Thyroid gland (tissue), 4 donors: ENCODE measurements at regions of chr13 and their contacts with region 1.

Region 1: GRCh38 chr13:113562085-113562749 is 22.3 kb upstream of the TFDP1 start:
- DNase-seq: peak; percentile 55 to 64
- H3K4me3 ChIP-seq: no peak overlapping the region
- H3K27ac ChIP-seq: no peak overlapping the region
- H3K4me1 ChIP-seq: no peaks in the 10 kb centered on the region
- H3K27me3 ChIP-seq: no peaks in the 10 kb centered on the region
- CTCF ChIP-seq: peak; percentile 11 to 77 (median 61)
- POLR2A ChIP-seq: no peak

Region 2: DNA sequence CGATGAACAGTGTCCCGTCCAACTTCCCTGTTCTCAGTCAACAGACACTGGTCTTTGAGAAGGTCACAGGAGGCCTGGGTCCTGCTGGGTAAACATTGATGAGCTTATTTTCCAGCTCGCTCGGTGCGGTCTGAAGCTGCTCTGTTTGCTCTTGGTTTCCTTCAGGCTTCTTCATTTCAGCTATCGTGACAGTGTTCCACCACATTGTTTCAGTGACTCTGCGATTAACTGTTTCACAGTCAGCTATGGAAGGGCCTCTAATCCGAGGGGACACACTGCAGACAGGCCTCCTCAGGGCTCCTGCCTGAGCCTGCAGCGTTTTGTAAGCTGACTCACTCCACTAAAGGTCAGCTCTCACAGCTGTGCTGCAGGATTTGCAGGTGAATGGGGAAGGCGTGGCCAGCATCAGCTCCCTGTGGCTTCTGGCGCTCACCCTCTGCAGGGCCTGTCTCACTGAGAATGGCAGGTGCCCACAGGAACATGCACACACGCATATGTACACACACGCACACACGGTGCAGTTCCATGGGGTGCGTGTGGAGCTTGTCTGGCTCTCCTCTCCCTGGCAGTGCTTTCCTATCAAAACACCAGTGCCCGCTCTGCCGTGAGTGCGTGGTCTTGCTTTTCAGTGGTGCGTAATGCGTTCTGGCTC is 656.1 kb before region 1 on chr13:
- intact Hi-C with region 1: no loop called
- DNase-seq: no peak
- H3K4me3 ChIP-seq: no peak overlapping the region
- H3K27ac ChIP-seq: no peak overlapping the region
- H3K4me1 ChIP-seq: peaks cover 39 to 41% of the 10 kb centered on the region in 2 donors
- H3K27me3 ChIP-seq: no peaks in the 10 kb centered on the region
- CTCF ChIP-seq: no peak
- POLR2A ChIP-seq: no peak

Region 3: GRCh38 chr13:113490496-113491417 is 71.5 kb before region 1 on chr13 and contains the start of gene DCUN1D2:
- intact Hi-C with region 1: loop called (anchors 10 kb)
- DNase-seq: peak; percentile 85 to 88
- H3K4me3 ChIP-seq: peak within 1 kb of the TSS; percentile 13 to 98 (median 63)
- H3K27ac ChIP-seq: peak within 1 kb of the TSS in 2 of 3 donors; percentile 69 to 71
- H3K4me1 ChIP-seq: peaks cover 28 to 32% of the 10 kb centered on the region in 2 donors
- H3K27me3 ChIP-seq: no peaks in the 10 kb centered on the region
- CTCF ChIP-seq: no peak
- POLR2A ChIP-seq: peak in 1 of 2 donors; percentile 82
- total RNA-seq, gene DCUN1D2: 8.8 to 15.3 (median 10.4) TPM

Region 4: DNA sequence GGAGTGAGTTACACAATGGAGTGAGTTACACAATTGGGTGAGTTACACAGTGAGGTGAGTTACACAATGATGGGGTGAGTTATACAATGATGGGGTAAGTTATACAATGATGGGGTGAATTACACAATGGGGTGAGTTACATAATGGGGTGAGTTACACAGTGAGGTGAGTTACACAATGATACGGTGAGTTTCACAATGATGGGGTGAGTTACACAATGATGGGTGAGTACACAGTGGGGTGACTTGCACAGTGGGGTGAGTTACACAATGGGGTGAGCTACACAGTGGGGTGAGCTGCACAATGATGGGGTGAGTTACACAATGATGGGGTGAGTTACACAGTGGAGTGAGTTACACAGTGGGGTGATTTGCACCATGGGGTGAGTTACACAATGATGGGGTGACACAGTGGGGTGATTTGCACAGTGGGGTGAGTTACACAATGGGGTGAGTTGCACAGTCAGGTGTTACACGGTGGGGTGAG is 354.2 kb after region 1 on chr13:
- intact Hi-C with region 1: no loop called
- DNase-seq: no peak
- H3K4me3 ChIP-seq: no peak overlapping the region
- H3K27ac ChIP-seq: no peak overlapping the region
- H3K4me1 ChIP-seq: no peaks in the 10 kb centered on the region
- H3K27me3 ChIP-seq: no peaks in the 10 kb centered on the region
- CTCF ChIP-seq: no peak
- POLR2A ChIP-seq: no peak